SK-N-SH (cell line): ENCODE measurements at regions of chr12 and their contacts with region 1.

Region 1: DNA sequence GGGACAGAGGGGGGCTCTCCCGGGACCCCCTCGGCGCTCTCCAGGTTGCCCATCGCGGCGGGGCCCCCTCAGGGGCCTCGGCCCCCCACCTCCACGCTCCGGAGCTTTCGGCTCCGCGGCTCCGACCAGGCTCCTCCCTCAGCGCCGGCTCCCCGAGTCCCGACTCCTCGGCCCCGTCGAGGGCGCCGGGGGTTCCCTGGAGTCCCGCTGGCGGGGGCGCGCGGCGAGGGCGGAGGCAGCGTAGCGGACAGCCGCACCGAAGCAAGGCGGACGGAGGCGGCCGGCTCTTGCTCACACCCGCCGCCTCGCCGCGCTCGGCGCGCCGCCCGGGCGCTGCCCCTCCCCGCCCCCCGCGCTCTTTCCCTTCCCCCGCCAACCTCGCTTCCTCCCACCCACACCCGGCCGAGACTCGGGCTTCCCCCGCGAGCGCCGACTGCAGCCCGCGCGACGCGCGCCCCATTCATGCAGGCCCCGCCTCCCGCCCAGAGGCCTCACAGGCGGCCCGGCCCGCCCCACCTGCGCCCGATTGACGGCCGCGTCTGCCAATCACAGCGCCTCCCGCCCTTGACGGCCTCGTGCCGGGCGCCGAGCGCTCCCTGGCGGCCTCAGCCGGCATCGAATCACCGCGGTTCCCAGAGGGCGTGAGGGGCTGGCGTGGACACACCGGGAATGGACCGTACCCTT is at the start of gene FMNL3:
- DNase-seq: peak; percentile 99
- H3K4me3 ChIP-seq: peak within 1 kb of the TSS; percentile 83 to 96
- H3K27ac ChIP-seq: peak within 1 kb of the TSS; percentile 79 to 88
- H3K4me1 ChIP-seq: peaks cover 25 to 28% of the 10 kb centered on the region in 2 experiments; a peak in 3 of 4 replicates
- H3K27me3 ChIP-seq: no peaks in the 10 kb centered on the region
- CTCF ChIP-seq: peak; percentile 93
- EP300 ChIP-seq: 0 out of 4 replicates have a peak, but pooled peaks of 1 of the 2 experiments have one; percentile 25
- RAD21 ChIP-seq: peak; percentile 95
- polyA plus RNA-seq, gene FMNL3: 10.2 and 13.1 TPM in 2 replicates

Region 2: GRCh38 chr12:49623142-49623904 is 83.9 kb before region 1 on chr12 and contains the start of gene PRPF40B:
- CTCF ChIA-PET with region 1: interaction called, 10 read pairs
- POLR2A ChIA-PET with region 1: no interaction called
- DNase-seq: peak; percentile 99
- H3K4me3 ChIP-seq: peak within 1 kb of the TSS; percentile 63 to 67
- H3K27ac ChIP-seq: peak within 1 kb of the TSS; percentile 79 to 86
- H3K4me1 ChIP-seq: peaks cover 14 to 43% of the 10 kb centered on the region in 2 experiments; a peak in 3 of 4 replicates
- H3K27me3 ChIP-seq: no peaks in the 10 kb centered on the region
- CTCF ChIP-seq: peak; percentile 42
- EP300 ChIP-seq: 0 out of 4 replicates have a peak, but pooled peaks of 1 of the 2 experiments have one; percentile 33
- RAD21 ChIP-seq: peak; percentile 18; the same call in 1 of the 2 replicates
- polyA plus RNA-seq, gene PRPF40B: 24.3 and 27.0 TPM in 2 replicates

Region 3: DNA sequence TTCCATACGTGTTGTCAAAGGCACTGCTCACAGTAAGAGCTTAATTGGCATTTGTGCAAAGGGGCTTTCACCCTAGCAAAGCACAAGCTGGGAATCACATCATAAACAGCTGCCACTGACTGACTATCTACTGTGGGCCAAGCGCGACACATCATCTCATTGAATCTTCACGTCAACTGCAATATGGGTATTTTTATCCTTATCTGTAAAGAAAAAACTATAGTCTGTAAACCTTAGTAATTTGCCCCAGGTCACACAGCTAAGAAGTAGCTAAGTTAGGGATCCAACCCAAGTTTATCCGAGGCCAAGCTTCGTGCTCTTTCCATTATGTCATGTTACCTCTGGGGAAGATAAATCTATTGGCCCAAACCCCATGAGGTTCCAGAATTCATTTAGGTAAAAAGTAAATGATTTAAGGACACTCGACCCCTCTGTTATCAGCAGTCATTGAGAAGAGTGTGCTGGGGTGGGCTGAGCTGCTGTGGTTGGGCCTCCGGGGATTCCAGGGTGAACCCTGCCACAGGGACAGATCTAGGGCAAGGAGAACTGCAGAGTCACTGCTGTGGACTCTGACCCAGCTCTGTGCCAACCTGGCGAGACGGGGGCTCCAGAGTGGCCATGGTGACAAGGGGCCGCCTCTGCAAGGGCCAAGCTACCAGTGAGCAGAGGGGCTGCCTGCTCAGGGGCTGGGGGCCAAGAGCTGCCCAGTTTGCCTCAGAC is 93.3 kb after region 1 on chr12:
- CTCF ChIA-PET with region 1: no interaction called
- POLR2A ChIA-PET with region 1: no interaction called
- DNase-seq: no peak
- H3K4me3 ChIP-seq: no peak overlapping the region
- H3K27ac ChIP-seq: no peak overlapping the region
- H3K4me1 ChIP-seq: no peaks in the 10 kb centered on the region
- H3K27me3 ChIP-seq: no peaks in the 10 kb centered on the region
- CTCF ChIP-seq: no peak
- EP300 ChIP-seq: no peak
- RAD21 ChIP-seq: no peak